WTC11 (cell line): ENCODE measurements at regions of chr10 and their contacts with region 1.

Region 1: GRCh38 chr10:29438271-29438670 is 149.4 kb downstream of the LYZL1 start:
- DNase-seq: no peak
- ATAC-seq: no peak
- H3K4me3 Mint-ChIP-seq: no peak overlapping the region
- H3K27ac Mint-ChIP-seq: no peak overlapping the region
- H3K4me1 Mint-ChIP-seq: peaks cover 20% of the 10 kb centered on the region
- H3K27me3 Mint-ChIP-seq: peaks cover 8% of the 10 kb centered on the region
- CTCF ChIP-seq: no peak

Region 2: GRCh38 chr10:29022473-29022872 is 415.8 kb before region 1 on chr10:
- CTCF ChIA-PET with region 1: no interaction called
- POLR2A ChIA-PET with region 1: interaction called, 12 read pairs
- DNase-seq: no peak
- ATAC-seq: no peak
- H3K4me3 Mint-ChIP-seq: no peak overlapping the region
- H3K27ac Mint-ChIP-seq: peak overlapping the region; percentile 42; the same call in 1 of the 2 replicates
- H3K4me1 Mint-ChIP-seq: peaks cover 19% of the 10 kb centered on the region
- H3K27me3 Mint-ChIP-seq: peaks cover 5% of the 10 kb centered on the region
- CTCF ChIP-seq: no peak